ENCODE measurements at regions of chr5 and their contacts with region 1.

Region 1: GRCh38 chr5:138035605-138036537 is 3.0 kb upstream of the FAM13B start:
- DNase-seq: peak; percentile 11 to 80 (median 72)
- ATAC-seq: peak; percentile 76
- H3K4me3 ChIP-seq: no peak overlapping the region
- H3K4me3 Mint-ChIP-seq: peak overlapping the region in 9 of 10 donors; percentile 0 to 78 (median 25)
- H3K27ac ChIP-seq: no peak overlapping the region
- H3K27ac Mint-ChIP-seq: peak overlapping the region in 8 of 9 donors; percentile 4 to 89 (median 37)
- H3K4me1 ChIP-seq: peaks cover 4 to 24% of the 10 kb centered on the region in 2 donors
- H3K4me1 Mint-ChIP-seq: peaks cover 15 to 30% (median 24%) of the 10 kb centered on the region in 7 donors
- H3K27me3 ChIP-seq: no peaks in the 10 kb centered on the region
- H3K27me3 Mint-ChIP-seq: no peaks in the 10 kb centered on the region

Region 2: GRCh38 chr5:137660349-137660817 is 375.5 kb before region 1 on chr5:
- CTCF ChIA-PET with region 1: no interaction called
- POLR2A ChIA-PET with region 1: no interaction called
- intact Hi-C with region 1: loop called in 1 of 2 experiments (anchors 10 kb)
- DNase-seq: peak; percentile 32 to 78 (median 70)
- ATAC-seq: peak; percentile 91
- H3K4me3 ChIP-seq: no peak overlapping the region
- H3K4me3 Mint-ChIP-seq: no peak overlapping the region
- H3K27ac ChIP-seq: no peak overlapping the region
- H3K27ac Mint-ChIP-seq: peak overlapping the region in 4 of 9 donors; percentile 27 to 45 (median 36)
- H3K4me1 ChIP-seq: peaks cover 0 to 4% of the 10 kb centered on the region in 2 donors
- H3K4me1 Mint-ChIP-seq: peaks cover 0 to 17% (median 14%) of the 10 kb centered on the region in 7 donors
- H3K27me3 ChIP-seq: no peaks in the 10 kb centered on the region
- H3K27me3 Mint-ChIP-seq: no peaks in the 10 kb centered on the region

Region 3: GRCh38 chr5:137896560-137896959 is 139.3 kb before region 1 on chr5:
- CTCF ChIA-PET with region 1: interaction called, 11 read pairs
- POLR2A ChIA-PET with region 1: no interaction called
- intact Hi-C with region 1: no loop called
- DNase-seq: no peak
- ATAC-seq: no peak
- H3K4me3 ChIP-seq: no peak overlapping the region
- H3K4me3 Mint-ChIP-seq: no peak overlapping the region
- H3K27ac ChIP-seq: no peak overlapping the region
- H3K27ac Mint-ChIP-seq: peak overlapping the region in 1 of 9 donors; percentile 14
- H3K4me1 ChIP-seq: no peaks in the 10 kb centered on the region
- H3K4me1 Mint-ChIP-seq: peaks cover 0 to 5% (median 0%) of the 10 kb centered on the region in 7 donors
- H3K27me3 ChIP-seq: no peaks in the 10 kb centered on the region
- H3K27me3 Mint-ChIP-seq: peaks cover 0 to 5% (median 4%) of the 10 kb centered on the region in 5 donors

Region 4: DNA sequence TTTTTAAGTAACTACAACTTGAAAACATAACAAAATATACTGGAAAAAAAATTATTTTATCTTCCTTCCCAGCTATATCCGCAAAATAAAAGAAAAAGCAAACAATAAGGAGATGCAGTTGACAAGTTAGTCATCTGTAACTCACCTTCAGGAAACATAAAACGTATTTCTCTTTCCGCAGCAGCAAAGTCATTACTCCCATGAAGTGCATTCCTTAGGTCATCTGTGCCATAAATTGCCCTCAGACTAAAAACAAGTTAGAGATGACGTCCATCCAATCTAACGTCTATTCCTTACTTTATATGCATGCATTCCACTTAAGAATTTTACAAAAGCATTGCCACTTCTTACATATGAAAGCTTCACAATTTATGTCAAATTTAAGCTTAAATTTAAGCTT is 92.5 kb after region 1 on chr5:
- CTCF ChIA-PET with region 1: interaction called, 7 read pairs
- POLR2A ChIA-PET with region 1: no interaction called
- intact Hi-C with region 1: loop called (anchors 1 kb)
- DNase-seq: no peak
- ATAC-seq: no peak
- H3K4me3 ChIP-seq: no peak overlapping the region
- H3K4me3 Mint-ChIP-seq: no peak overlapping the region
- H3K27ac ChIP-seq: no peak overlapping the region
- H3K27ac Mint-ChIP-seq: no peak overlapping the region
- H3K4me1 ChIP-seq: no peaks in the 10 kb centered on the region
- H3K4me1 Mint-ChIP-seq: peaks cover 0 to 2% (median 0%) of the 10 kb centered on the region in 7 donors
- H3K27me3 ChIP-seq: no peaks in the 10 kb centered on the region
- H3K27me3 Mint-ChIP-seq: peaks cover 0 to 22% (median 4%) of the 10 kb centered on the region in 5 donors

Region 5: GRCh38 chr5:138337685-138338410 is 302.0 kb after region 1 on chr5 and contains the start of gene FAM53C:
- CTCF ChIA-PET with region 1: no interaction called
- POLR2A ChIA-PET with region 1: no interaction called
- intact Hi-C with region 1: loop called (anchors 5 kb)
- DNase-seq: peak; percentile 87 to 98 (median 93)
- ATAC-seq: peak; percentile 91
- H3K4me3 ChIP-seq: peak within 1 kb of the TSS; percentile 86
- H3K4me3 Mint-ChIP-seq: peak within 1 kb of the TSS; percentile 77 to 98 (median 94)
- H3K27ac ChIP-seq: peak within 1 kb of the TSS; percentile 95
- H3K27ac Mint-ChIP-seq: peak within 1 kb of the TSS; percentile 96 to 100 (median 99)
- H3K4me1 ChIP-seq: peaks cover 17 to 25% of the 10 kb centered on the region in 2 donors
- H3K4me1 Mint-ChIP-seq: peaks cover 16 to 42% (median 39%) of the 10 kb centered on the region in 7 donors
- H3K27me3 ChIP-seq: no peaks in the 10 kb centered on the region
- H3K27me3 Mint-ChIP-seq: no peaks in the 10 kb centered on the region
- total RNA-seq, gene FAM53C: 25.0 to 71.8 (median 27.7) TPM

Region 6: GRCh38 chr5:138449501-138450239 is 413.8 kb after region 1 on chr5:
- CTCF ChIA-PET with region 1: no interaction called
- POLR2A ChIA-PET with region 1: no interaction called
- intact Hi-C with region 1: no loop called
- DNase-seq: peak; percentile 24 to 89 (median 60)
- ATAC-seq: peak; percentile 91
- H3K4me3 ChIP-seq: no peak overlapping the region
- H3K4me3 Mint-ChIP-seq: peak overlapping the region in 4 of 10 donors; percentile 33 to 54 (median 46)
- H3K27ac ChIP-seq: no peak overlapping the region
- H3K27ac Mint-ChIP-seq: no peak overlapping the region
- H3K4me1 ChIP-seq: peaks cover 7% of the 10 kb centered on the region in 2 donors
- H3K4me1 Mint-ChIP-seq: peaks cover 0 to 9% (median 6%) of the 10 kb centered on the region in 7 donors
- H3K27me3 ChIP-seq: no peaks in the 10 kb centered on the region
- H3K27me3 Mint-ChIP-seq: peaks cover 0 to 3% (median 0%) of the 10 kb centered on the region in 5 donors

Region 7: GRCh38 chr5:138503487-138504270 is 467.8 kb after region 1 on chr5:
- CTCF ChIA-PET with region 1: no interaction called
- POLR2A ChIA-PET with region 1: no interaction called
- intact Hi-C with region 1: no loop called
- DNase-seq: peak in 7 of 9 donors; percentile 30 to 60 (median 49)
- ATAC-seq: peak; percentile 82
- H3K4me3 ChIP-seq: no peak overlapping the region
- H3K4me3 Mint-ChIP-seq: no peak overlapping the region
- H3K27ac ChIP-seq: no peak overlapping the region
- H3K27ac Mint-ChIP-seq: peak overlapping the region in 3 of 9 donors; percentile 9 to 47 (median 32)
- H3K4me1 ChIP-seq: no peaks in the 10 kb centered on the region
- H3K4me1 Mint-ChIP-seq: peaks cover 0 to 5% (median 3%) of the 10 kb centered on the region in 7 donors
- H3K27me3 ChIP-seq: no peaks in the 10 kb centered on the region
- H3K27me3 Mint-ChIP-seq: no peaks in the 10 kb centered on the region

Region 8: DNA sequence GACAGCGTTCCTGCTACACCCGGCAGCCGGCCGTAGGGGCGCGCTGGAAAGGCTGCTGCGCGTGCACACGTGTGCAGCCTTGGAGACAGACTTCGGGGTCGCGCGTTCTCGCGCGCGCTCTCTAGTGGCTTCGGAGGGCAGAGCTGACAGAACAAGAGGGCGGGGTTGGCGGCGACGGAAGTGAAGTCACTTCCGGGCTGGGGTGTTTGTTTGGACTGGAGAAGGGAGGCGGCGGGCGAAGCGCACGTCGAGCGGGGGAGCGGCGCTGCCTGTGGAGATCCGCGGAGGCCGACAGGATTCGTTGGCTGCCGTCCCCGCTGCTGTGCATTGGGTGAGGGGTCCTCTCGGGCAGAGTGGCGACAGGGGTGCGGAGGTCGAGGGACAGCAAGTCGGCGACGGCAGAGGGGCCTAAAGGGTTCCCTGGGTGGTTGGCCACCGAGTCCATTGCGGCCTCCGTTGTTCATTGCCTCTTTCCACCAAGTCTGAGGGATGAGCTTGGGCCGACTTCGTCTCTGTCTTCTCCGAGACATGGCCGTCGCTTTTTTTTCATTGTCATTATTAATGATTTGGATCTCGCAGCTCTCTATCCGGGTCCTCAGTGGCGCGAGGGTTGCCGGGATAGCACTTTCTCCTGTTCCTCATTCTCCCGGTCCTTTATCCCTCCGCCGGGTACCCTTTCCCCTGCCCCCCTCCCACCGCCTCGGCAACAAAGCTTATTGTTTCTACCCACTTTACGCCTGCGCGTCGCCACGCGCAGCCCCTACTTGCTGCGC is 1306.0 kb after region 1 on chr5 and contains the start of gene PAIP2:
- CTCF ChIA-PET with region 1: no interaction called
- POLR2A ChIA-PET with region 1: no interaction called
- intact Hi-C with region 1: loop called in 1 of 2 experiments (anchors 2 kb)
- DNase-seq: peak; percentile 94 to 98 (median 97)
- ATAC-seq: peak; percentile 95
- H3K4me3 ChIP-seq: peak within 1 kb of the TSS; percentile 96
- H3K4me3 Mint-ChIP-seq: peak within 1 kb of the TSS; percentile 95 to 100 (median 98)
- H3K27ac ChIP-seq: peak within 1 kb of the TSS; percentile 98
- H3K27ac Mint-ChIP-seq: peak within 1 kb of the TSS; percentile 96 to 100 (median 99)
- H3K4me1 ChIP-seq: peaks cover 28 to 30% of the 10 kb centered on the region in 2 donors
- H3K4me1 Mint-ChIP-seq: peaks cover 34 to 65% (median 55%) of the 10 kb centered on the region in 7 donors
- H3K27me3 ChIP-seq: no peaks in the 10 kb centered on the region
- H3K27me3 Mint-ChIP-seq: peaks cover 0 to 5% (median 0%) of the 10 kb centered on the region in 5 donors
- total RNA-seq, gene PAIP2: 88.8 to 121 (median 106) TPM

Measured in naive thymus-derived CD4-positive, alpha-beta T cell (primary cell).